ENCODE measurements at regions of chr9 and their contacts with region 1.

Region 1: GRCh38 chr9:71768388-71769174 is at the start of gene CEMIP2:
- DNase-seq: peak; percentile 90
- H3K4me3 Mint-ChIP-seq: peak within 1 kb of the TSS; percentile 84
- H3K27ac Mint-ChIP-seq: peak within 1 kb of the TSS; percentile 83
- H3K4me1 Mint-ChIP-seq: peaks cover 33% of the 10 kb centered on the region
- H3K27me3 Mint-ChIP-seq: no peaks in the 10 kb centered on the region
- total RNA-seq, gene CEMIP2: 137 to 140 TPM

Region 2: GRCh38 chr9:71285191-71285656 is 483.4 kb before region 1 on chr9:
- CTCF ChIA-PET with region 1: interaction called, 12 read pairs
- POLR2A ChIA-PET with region 1: no interaction called
- DNase-seq: peak; percentile 29
- H3K4me3 Mint-ChIP-seq: no peak overlapping the region
- H3K27ac Mint-ChIP-seq: no peak overlapping the region
- H3K4me1 Mint-ChIP-seq: no peaks in the 10 kb centered on the region
- H3K27me3 Mint-ChIP-seq: no peaks in the 10 kb centered on the region

Region 3: GRCh38 chr9:71459082-71459481 is 309.5 kb before region 1 on chr9:
- CTCF ChIA-PET with region 1: no interaction called
- POLR2A ChIA-PET with region 1: no interaction called
- DNase-seq: no peak
- H3K4me3 Mint-ChIP-seq: no peak overlapping the region
- H3K27ac Mint-ChIP-seq: no peak overlapping the region
- H3K4me1 Mint-ChIP-seq: no peaks in the 10 kb centered on the region
- H3K27me3 Mint-ChIP-seq: peaks cover 4% of the 10 kb centered on the region

Region 4: GRCh38 chr9:71587576-71588362 is 180.8 kb before region 1 on chr9:
- CTCF ChIA-PET with region 1: no interaction called
- POLR2A ChIA-PET with region 1: no interaction called
- DNase-seq: no peak
- H3K4me3 Mint-ChIP-seq: no peak overlapping the region
- H3K27ac Mint-ChIP-seq: no peak overlapping the region
- H3K4me1 Mint-ChIP-seq: no peaks in the 10 kb centered on the region
- H3K27me3 Mint-ChIP-seq: peaks cover 3% of the 10 kb centered on the region

Region 5: GRCh38 chr9:71638627-71639026 is 130.0 kb before region 1 on chr9:
- CTCF ChIA-PET with region 1: interaction called, 3 read pairs
- POLR2A ChIA-PET with region 1: interaction called, 29 read pairs
- DNase-seq: peak; percentile 59
- H3K4me3 Mint-ChIP-seq: peak overlapping the region; percentile 57
- H3K27ac Mint-ChIP-seq: peak overlapping the region; percentile 94
- H3K4me1 Mint-ChIP-seq: peaks cover 42% of the 10 kb centered on the region
- H3K27me3 Mint-ChIP-seq: no peaks in the 10 kb centered on the region

Region 6: DNA sequence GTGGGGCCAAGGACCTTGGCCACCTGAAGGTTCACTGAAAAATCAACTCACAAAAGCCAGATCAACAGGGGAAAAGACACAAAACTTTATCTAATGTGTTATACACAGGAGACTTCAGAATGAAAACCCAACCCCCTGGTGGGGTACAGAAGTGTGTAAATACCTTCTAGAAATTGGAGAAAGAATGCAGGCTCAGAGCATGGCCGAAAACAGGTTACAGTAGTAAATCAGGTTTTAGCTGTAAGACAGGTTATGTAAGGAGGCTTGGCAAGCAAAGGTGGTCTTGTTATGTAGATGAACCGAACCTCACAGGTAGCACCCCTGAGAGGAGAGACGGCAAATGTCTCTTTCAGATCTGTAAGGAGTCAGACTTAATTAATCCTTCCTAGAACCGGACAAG is 10.3 kb before region 1 on chr9:
- CTCF ChIA-PET with region 1: no interaction called
- POLR2A ChIA-PET with region 1: interaction called, 10 read pairs
- DNase-seq: no peak
- H3K4me3 Mint-ChIP-seq: no peak overlapping the region
- H3K27ac Mint-ChIP-seq: no peak overlapping the region
- H3K4me1 Mint-ChIP-seq: peaks cover 72% of the 10 kb centered on the region
- H3K27me3 Mint-ChIP-seq: no peaks in the 10 kb centered on the region

Region 7: GRCh38 chr9:71806901-71807307 is 38.3 kb after region 1 on chr9:
- CTCF ChIA-PET with region 1: interaction called, 13 read pairs
- POLR2A ChIA-PET with region 1: interaction called, 5 read pairs
- DNase-seq: peak; percentile 68
- H3K4me3 Mint-ChIP-seq: no peak overlapping the region
- H3K27ac Mint-ChIP-seq: no peak overlapping the region
- H3K4me1 Mint-ChIP-seq: peaks cover 5% of the 10 kb centered on the region
- H3K27me3 Mint-ChIP-seq: no peaks in the 10 kb centered on the region

Region 8: GRCh38 chr9:72364679-72365524 is 596.3 kb after region 1 on chr9 and contains the start of gene ZFAND5:
- CTCF ChIA-PET with region 1: no interaction called
- POLR2A ChIA-PET with region 1: interaction called, 10 read pairs
- DNase-seq: peak; percentile 92
- H3K4me3 Mint-ChIP-seq: peak within 1 kb of the TSS; percentile 87
- H3K27ac Mint-ChIP-seq: peak within 1 kb of the TSS; percentile 87
- H3K4me1 Mint-ChIP-seq: peaks cover 40% of the 10 kb centered on the region
- H3K27me3 Mint-ChIP-seq: no peaks in the 10 kb centered on the region
- total RNA-seq, gene ZFAND5: 101 to 103 TPM